Tibial artery (tissue), 4 donors: ENCODE measurements at regions of chr17 and their contacts with region 1.

Region 1: DNA sequence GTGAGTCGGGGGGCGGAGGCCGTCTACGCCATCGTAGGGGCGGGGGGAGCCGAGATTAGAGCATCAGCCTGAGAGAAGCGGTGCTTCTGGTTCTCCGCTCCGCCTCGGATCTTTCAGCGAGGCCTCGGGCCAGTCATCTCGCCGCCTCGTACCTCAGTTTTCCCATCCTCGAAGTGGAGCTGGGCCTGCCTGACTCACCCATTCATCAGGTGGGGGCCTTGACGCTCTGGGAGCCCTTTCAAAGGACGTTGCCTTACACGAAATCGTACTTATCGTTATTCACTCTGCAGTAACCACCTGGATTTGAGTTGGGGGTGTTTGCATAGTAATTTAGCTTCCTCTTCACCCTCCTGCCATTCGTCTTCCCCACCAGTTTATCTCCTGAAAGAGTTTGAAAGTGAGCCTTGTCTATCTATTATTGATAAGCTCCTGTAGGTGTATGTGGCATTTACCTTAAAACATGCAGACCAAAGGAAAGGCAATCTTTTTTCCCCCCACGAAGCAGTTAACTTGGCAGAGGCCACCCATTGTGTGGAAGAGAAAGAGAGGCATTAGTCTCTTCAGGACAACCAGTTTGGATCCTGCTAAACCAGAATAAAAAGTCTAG is 674 bp downstream of the TAF15 start:
- DNase-seq: no peak
- H3K4me3 ChIP-seq: peak overlapping the region; percentile 80 to 89
- H3K27ac ChIP-seq: peak overlapping the region; percentile 94 to 98
- H3K4me1 ChIP-seq: peaks cover 0 to 72% (median 30%) of the 10 kb centered on the region in 4 donors
- H3K27me3 ChIP-seq: no peaks in the 10 kb centered on the region
- CTCF ChIP-seq: no peak

Region 2: DNA sequence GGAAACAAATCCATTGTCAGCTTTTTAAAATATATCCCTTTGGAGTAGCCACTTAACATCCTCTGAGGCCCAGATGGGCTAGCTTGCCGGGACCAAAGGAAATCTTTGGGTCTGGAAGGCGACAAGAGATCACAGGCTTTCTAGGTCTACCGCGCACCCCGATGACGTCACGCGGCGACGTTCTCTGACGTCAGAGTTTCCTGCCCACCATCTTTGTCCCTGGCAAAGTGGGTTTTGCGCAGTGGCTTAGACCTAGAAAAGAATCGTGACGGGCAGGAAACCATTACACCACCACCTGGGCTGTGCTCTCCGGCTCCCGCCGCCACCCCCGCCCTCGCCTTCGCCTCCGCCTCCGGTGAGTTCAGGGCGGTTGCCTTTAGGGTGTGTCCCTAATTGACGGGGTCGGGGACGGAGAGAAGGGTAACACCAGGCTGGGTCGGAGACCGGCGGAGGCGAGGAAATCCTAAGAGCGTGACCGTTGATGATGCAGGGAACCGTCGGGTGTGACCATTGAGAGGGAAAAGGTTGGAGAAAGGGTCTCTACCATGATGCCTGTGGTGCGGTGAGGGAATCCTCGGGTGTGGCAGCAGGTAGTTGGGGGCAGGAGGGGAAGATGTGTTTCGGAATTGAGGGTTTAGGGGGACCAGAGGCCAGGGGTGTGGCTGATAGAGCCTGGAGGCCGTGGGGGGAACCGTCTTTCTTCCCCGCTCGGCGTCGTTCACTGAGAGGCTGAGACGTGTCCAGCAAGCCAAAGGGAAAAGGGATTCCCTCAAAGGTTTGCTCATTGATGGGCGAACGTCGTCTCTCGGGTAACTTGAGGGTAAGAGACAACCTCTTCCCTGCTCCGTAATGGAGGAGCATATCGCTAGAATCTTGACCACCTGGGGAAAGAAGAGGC is 222.6 kb before region 1 on chr17 and contains the start of gene AP2B1:
- intact Hi-C with region 1: loop called (anchors 10 kb)
- DNase-seq: peak; percentile 91 to 97
- H3K4me3 ChIP-seq: peak within 1 kb of the TSS; percentile 75 to 78
- H3K27ac ChIP-seq: peak within 1 kb of the TSS; percentile 89 to 91
- H3K4me1 ChIP-seq: peaks cover 0 to 29% (median 17%) of the 10 kb centered on the region in 4 donors
- H3K27me3 ChIP-seq: peaks cover 0 to 2% of the 10 kb centered on the region in 2 donors
- CTCF ChIP-seq: no peak

Region 3: DNA sequence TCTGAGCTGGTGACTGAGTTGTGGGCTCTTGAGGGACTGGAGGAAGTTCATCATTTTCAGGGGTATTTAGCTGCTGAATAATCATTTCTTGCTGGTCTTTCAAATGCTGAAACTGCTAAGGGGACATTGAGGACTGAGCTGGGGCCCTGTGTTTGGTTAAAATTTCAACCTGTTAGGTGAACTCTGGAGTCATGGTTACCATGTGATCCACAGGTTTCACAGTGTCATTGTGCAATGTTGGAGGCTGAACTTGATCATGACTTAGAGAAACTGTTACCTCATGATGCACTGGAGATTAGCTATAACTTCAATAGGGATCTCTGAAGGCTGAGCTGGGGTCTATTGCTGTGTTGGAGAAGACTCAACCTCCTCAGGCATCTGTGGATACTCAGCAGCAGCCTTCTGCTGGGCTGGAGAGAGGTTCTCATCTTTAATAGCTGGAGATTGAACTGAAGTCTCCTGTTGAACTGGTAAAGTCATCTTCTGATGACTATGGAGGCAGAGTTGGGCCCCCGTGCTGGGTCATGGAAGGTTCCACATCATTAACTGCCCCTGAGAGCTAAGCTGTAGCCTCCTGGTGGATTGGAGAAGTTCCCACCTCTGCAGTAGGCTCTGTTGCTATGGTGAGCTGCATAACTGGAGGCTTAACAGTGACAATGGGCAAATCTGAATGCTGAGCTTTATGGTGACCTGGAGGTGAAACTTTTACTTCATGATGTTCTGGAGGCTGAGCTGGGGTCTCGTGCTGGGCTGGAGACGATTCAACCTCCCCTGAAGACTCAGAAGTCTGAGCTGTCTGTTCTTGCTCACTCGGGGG is 105.4 kb after region 1 on chr17:
- intact Hi-C with region 1: no loop called
- DNase-seq: peak in 1 of 2 donors; percentile 21
- H3K4me3 ChIP-seq: no peak overlapping the region
- H3K27ac ChIP-seq: no peak overlapping the region
- H3K4me1 ChIP-seq: no peaks in the 10 kb centered on the region
- H3K27me3 ChIP-seq: no peaks in the 10 kb centered on the region
- CTCF ChIP-seq: no peak